SK-N-SH (cell line): ENCODE measurements at regions of chr16 and their contacts with region 1.

Region 1: GRCh38 chr16:68406451-68407152 is 41.7 kb downstream of the SMPD3 start:
- DNase-seq: peak; percentile 76
- H3K4me3 ChIP-seq: peak overlapping the region; percentile 23; a peak in 2 of 4 replicates
- H3K27ac ChIP-seq: peak overlapping the region in 1 of 2 experiments; percentile 95; a peak in 2 of 4 replicates
- H3K4me1 ChIP-seq: peaks cover 7 to 14% of the 10 kb centered on the region in 2 experiments; a peak in 3 of 4 replicates
- H3K27me3 ChIP-seq: peaks cover 7% of the 10 kb centered on the region; the same call in 1 of the 2 replicates
- CTCF ChIP-seq: no peak
- EP300 ChIP-seq: peak in 1 of 2 experiments; percentile 49; a peak in 1 of 4 replicates
- RAD21 ChIP-seq: no peak; the same call in 1 of the 2 replicates

Region 2: DNA sequence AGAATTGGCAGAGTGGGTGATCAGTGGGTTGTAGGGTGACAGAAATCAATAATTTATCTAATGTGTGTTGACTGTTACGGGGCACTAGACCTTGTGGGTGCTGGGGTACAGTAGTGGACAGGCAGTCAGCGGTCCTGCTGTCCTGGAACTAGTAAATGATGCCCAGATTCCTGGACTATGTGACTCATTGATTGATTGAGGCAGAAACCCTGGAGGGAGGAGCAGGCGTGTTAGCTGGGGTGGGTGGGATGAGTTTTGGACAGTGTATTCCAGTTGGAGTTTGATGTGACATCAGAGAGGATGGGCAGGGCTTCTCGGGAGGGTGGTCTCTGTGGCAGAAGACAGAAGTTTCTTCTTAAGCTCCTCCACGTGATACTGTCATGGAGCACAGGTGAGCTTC is 71.4 kb before region 1 on chr16:
- CTCF ChIA-PET with region 1: no interaction called
- POLR2A ChIA-PET with region 1: no interaction called
- DNase-seq: no peak
- H3K4me3 ChIP-seq: no peak overlapping the region
- H3K27ac ChIP-seq: no peak overlapping the region
- H3K4me1 ChIP-seq: peaks cover 0 to 10% of the 10 kb centered on the region in 2 experiments; a peak in 1 of 4 replicates
- H3K27me3 ChIP-seq: no peaks in the 10 kb centered on the region
- CTCF ChIP-seq: no peak
- EP300 ChIP-seq: no peak
- RAD21 ChIP-seq: no peak

Region 3: GRCh38 chr16:68367030-68367429 is 39.6 kb before region 1 on chr16:
- CTCF ChIA-PET with region 1: interaction called, 30 read pairs
- POLR2A ChIA-PET with region 1: interaction called, 3 read pairs
- DNase-seq: peak; percentile 74
- H3K4me3 ChIP-seq: no peak overlapping the region
- H3K27ac ChIP-seq: no peak overlapping the region
- H3K4me1 ChIP-seq: peaks cover 0 to 54% of the 10 kb centered on the region in 2 experiments; a peak in 2 of 4 replicates
- H3K27me3 ChIP-seq: no peaks in the 10 kb centered on the region
- CTCF ChIP-seq: peak; percentile 54
- EP300 ChIP-seq: no peak
- RAD21 ChIP-seq: peak; percentile 51

Region 4: DNA sequence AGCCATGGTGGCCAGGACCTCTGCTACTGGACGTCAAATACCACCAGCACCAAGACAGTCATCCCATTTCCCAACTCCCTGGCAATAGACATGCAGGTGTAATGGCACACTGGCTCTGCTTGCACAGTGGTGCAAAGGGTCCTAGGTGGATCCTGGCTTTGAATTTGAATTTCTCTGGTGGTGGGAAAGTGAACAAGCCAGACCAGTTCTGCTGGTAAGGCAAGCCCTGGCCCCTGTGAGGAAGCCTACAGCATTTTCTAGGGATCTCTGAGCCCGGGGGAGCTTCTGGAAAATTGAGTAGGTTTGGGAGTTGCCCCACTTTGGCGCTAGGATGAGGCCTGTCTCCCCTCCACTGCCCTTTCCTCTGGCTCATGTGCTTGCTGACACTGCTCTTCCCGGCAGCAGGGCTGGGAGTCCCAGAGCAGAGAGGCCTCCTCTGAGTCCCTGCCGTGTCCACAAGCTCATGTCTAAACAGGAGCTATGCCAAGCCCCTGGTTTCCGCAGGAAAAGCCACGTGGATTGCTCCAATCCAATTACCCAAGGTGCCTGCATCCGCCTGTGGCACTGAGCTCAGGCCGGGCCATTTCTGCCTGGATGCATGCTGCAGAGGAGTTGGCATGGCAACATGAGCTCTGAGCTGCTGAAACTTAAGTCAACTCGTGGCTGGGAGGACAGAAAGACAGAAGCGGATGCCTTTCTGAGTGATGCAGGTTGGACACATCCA is 28.8 kb before region 1 on chr16:
- CTCF ChIA-PET with region 1: interaction called, 9 read pairs
- POLR2A ChIA-PET with region 1: interaction called, 10 read pairs
- DNase-seq: peak; percentile 89
- H3K4me3 ChIP-seq: no peak overlapping the region
- H3K27ac ChIP-seq: peak overlapping the region in 1 of 2 experiments; percentile 74; a peak in 2 of 4 replicates
- H3K4me1 ChIP-seq: peaks cover 0 to 24% of the 10 kb centered on the region in 2 experiments; a peak in 1 of 4 replicates
- H3K27me3 ChIP-seq: no peaks in the 10 kb centered on the region
- CTCF ChIP-seq: no peak
- EP300 ChIP-seq: no peak; a peak in 1 of 4 replicates
- RAD21 ChIP-seq: peak; percentile 3; the same call in 1 of the 2 replicates

Region 5: DNA sequence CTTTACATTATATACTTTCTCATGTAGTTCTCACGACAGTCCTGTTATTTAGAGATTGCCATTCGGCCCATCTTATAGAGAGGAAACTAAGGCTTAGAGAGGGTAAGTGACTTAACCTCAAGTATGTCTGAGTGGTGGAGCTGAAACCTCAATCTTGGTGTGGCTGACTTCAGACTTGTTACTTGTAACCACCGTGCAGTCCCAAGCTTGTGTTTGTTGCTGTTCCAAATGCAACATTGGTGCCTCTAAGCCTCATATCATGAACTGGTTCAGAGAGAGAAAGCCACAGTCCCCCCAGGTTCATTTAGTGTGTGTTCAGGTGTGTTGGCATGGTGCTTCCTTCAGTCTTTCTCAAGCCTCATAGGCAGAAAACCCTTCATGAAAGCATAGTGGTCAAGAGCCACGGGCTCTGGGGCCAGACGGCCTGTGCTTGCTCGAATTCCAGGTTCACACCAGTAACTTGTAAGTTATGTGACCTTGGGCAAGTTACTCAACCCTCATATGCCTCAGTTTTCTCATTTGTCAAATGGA is 370.3 kb after region 1 on chr16:
- CTCF ChIA-PET with region 1: no interaction called
- POLR2A ChIA-PET with region 1: no interaction called
- DNase-seq: no peak
- H3K4me3 ChIP-seq: no peak overlapping the region
- H3K27ac ChIP-seq: no peak overlapping the region
- H3K4me1 ChIP-seq: peaks cover 0 to 3% of the 10 kb centered on the region in 2 experiments; a peak in 1 of 4 replicates
- H3K27me3 ChIP-seq: no peaks in the 10 kb centered on the region; the same call in 1 of the 2 replicates
- CTCF ChIP-seq: no peak
- EP300 ChIP-seq: no peak
- RAD21 ChIP-seq: no peak